ENCODE measurements at regions of chr2 and their contacts with region 1.

Region 1: DNA sequence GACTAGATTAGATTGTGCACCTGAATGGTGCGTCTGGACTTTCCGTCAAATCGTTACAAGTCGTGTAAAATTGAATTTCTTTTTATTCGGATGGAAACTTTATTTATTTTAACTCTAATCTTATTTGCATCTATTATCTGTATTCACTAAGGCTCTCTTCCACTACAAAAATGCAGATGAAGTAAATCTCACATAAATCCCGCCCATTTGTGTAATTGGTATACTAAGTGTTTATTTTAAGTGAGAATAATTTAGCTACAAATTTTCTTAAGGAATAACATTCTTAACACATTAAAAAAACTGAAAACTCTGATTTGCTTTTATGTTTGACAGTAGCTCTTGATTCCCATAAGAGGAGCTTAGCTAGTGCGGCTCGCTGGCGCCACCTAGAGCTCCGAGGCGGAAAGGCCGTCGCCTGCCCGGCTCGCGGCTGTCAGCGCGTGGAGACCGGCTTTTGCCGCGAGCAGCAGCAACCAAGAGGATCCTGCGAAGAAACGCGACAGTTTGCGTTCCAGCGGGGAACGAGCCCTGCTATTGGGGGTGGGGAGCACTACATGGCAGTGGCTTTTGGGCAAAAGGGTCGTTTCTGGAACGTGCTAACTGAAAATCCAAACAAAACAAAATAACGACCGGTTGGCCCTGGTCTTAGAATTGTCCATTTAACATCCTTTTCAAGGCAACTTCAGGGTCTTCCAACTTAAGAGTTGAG is 6.7 kb downstream of the SP9 start:
- DNase-seq: peak; percentile 97
- H3K4me3 Mint-ChIP-seq: peak overlapping the region; percentile 62
- H3K27ac Mint-ChIP-seq: peak overlapping the region; percentile 81
- H3K4me1 Mint-ChIP-seq: peaks cover 26% of the 10 kb centered on the region
- H3K27me3 Mint-ChIP-seq: peaks cover 63% of the 10 kb centered on the region

Region 2: GRCh38 chr2:173027181-173028128 is 1314.0 kb before region 1 on chr2:
- intact Hi-C with region 1: loop called (anchors 10 kb)
- DNase-seq: peak; percentile 92
- H3K4me3 Mint-ChIP-seq: no peak overlapping the region
- H3K27ac Mint-ChIP-seq: no peak overlapping the region
- H3K4me1 Mint-ChIP-seq: peaks cover 3% of the 10 kb centered on the region
- H3K27me3 Mint-ChIP-seq: peaks cover 13% of the 10 kb centered on the region

Region 3: DNA sequence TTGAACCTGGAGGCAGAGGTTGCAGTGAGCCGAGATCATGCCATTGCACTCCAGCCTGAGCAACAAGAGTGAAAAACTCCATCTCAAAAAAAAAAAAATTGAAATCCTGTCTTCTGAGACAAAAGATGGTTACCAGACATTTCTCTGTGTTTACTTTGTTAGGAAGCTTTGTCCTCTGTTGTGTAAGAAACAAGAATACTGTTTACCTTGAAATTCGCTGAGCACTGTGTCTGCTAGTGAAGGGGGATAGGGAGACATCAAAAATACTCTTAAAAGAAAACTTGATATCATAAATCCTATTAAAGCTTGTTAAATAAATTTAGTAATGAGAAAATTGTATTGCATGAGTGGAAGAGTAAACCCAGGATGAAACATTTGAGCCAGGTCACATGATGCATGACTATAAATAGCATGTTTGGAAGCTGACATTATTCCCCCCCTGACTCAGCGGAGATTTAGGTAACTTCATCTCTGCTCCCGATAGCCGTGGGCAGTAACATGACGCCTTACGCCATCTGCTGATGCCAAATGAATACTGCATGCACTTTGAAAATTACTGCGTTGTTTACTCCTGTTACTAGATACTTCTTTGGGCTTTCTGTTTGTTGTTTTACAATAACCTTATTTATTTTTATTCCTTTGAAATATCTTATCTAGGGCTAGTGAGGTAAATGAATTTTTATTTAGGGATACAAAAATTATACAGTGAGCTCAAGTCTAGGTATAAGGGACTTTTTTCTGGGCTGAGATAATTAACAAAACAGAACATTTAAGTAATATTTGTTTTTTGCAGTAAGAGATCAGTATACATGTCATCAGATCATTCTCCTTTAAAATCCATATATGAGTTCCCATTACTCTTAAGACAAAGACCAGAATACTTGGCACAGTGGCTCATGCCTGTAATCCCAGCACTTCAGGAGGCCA is 1130.9 kb before region 1 on chr2:
- intact Hi-C with region 1: loop called (anchors 10 kb)
- DNase-seq: peak; percentile 87
- H3K4me3 Mint-ChIP-seq: no peak overlapping the region
- H3K27ac Mint-ChIP-seq: no peak overlapping the region
- H3K4me1 Mint-ChIP-seq: peaks cover 6% of the 10 kb centered on the region
- H3K27me3 Mint-ChIP-seq: no peaks in the 10 kb centered on the region

Region 4: DNA sequence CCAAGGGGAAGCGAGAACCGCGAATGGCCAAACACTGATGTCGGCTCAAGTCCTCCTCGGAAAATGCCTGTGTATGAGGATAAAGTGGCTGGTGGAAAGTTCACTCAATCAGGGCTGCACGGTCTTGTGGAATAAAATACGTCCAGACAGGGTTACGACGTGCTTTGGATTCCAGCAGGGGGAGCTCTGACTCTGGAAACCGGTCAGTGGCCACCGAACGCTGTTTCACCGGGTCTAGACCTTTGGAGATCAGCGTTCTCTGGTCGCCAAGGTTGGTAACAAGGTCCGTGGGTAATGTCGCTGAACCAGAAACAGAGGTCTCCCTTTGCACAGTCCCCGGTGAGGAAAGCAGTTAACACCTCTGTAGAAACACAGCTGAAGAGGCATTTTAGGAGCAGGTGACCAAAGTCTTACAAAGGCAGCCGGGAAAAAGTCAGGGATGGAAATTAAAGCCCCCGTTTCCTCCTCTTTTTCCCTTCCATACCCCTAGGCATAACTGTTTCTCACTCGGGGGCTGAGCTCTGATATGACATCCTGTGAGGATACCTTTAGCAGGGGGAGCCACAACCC is 939.0 kb before region 1 on chr2:
- intact Hi-C with region 1: loop called (anchors 1 kb)
- DNase-seq: peak; percentile 92
- H3K4me3 Mint-ChIP-seq: no peak overlapping the region
- H3K27ac Mint-ChIP-seq: no peak overlapping the region
- H3K4me1 Mint-ChIP-seq: peaks cover 5% of the 10 kb centered on the region
- H3K27me3 Mint-ChIP-seq: peaks cover 58% of the 10 kb centered on the region

Region 5: DNA sequence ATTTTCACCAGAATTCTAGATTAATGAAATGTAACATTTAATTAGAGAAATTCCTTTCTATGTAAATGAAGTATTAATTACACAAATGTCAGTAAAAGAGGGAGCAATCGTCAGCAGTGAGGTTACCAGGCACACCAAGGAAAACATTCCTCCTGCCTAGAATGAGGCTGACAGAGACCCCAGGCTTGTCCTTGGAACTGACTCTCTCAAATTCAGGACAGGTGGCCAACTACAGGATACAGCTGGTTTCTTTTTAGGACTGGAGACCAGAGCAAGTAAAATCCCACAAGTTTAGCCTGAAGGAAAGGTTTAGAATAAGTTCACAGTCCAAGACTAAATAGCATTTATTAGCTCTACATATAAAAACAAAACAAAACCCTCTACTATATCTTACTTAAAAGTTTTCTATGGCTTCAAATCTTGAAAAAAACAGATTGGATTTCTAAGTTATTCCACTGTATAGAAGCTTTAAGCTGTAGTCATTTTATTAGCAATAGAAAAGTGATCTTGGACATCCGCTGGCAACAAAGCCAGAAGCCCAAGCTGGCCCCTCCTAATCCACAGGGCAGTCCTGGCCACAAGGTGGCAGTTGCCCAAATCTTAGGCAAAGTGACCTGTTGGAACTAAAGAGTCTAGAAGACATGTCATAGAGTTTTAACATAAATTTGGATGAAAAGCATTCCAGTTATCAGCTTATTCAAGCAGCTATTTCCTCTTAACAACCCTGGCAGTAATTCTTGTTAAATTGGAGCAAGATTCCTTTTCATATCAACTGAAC is 457.2 kb before region 1 on chr2:
- intact Hi-C with region 1: loop called (anchors 10 kb)
- DNase-seq: peak; percentile 69
- H3K4me3 Mint-ChIP-seq: no peak overlapping the region
- H3K27ac Mint-ChIP-seq: no peak overlapping the region
- H3K4me1 Mint-ChIP-seq: peaks cover 2% of the 10 kb centered on the region
- H3K27me3 Mint-ChIP-seq: peaks cover 24% of the 10 kb centered on the region

Region 6: GRCh38 chr2:174158003-174158402 is 183.4 kb before region 1 on chr2:
- intact Hi-C with region 1: loop called (anchors 5 kb)
- DNase-seq: peak; percentile 75
- H3K4me3 Mint-ChIP-seq: no peak overlapping the region
- H3K27ac Mint-ChIP-seq: no peak overlapping the region
- H3K4me1 Mint-ChIP-seq: peaks cover 6% of the 10 kb centered on the region
- H3K27me3 Mint-ChIP-seq: no peaks in the 10 kb centered on the region

Region 7: GRCh38 chr2:174326161-174327020 is 15.0 kb before region 1 on chr2:
- intact Hi-C with region 1: loop called (anchors 1 kb)
- DNase-seq: peak; percentile 76
- H3K4me3 Mint-ChIP-seq: peak overlapping the region; percentile 80
- H3K27ac Mint-ChIP-seq: no peak overlapping the region
- H3K4me1 Mint-ChIP-seq: peaks cover 16% of the 10 kb centered on the region
- H3K27me3 Mint-ChIP-seq: peaks cover 86% of the 10 kb centered on the region

Region 8: GRCh38 chr2:175430236-175430635 is 1088.8 kb after region 1 on chr2:
- intact Hi-C with region 1: no loop called
- DNase-seq: no peak
- H3K4me3 Mint-ChIP-seq: no peak overlapping the region
- H3K27ac Mint-ChIP-seq: no peak overlapping the region
- H3K4me1 Mint-ChIP-seq: no peaks in the 10 kb centered on the region
- H3K27me3 Mint-ChIP-seq: no peaks in the 10 kb centered on the region